ENCODE measurements at regions of chr2 and their contacts with region 1.

Region 1: DNA sequence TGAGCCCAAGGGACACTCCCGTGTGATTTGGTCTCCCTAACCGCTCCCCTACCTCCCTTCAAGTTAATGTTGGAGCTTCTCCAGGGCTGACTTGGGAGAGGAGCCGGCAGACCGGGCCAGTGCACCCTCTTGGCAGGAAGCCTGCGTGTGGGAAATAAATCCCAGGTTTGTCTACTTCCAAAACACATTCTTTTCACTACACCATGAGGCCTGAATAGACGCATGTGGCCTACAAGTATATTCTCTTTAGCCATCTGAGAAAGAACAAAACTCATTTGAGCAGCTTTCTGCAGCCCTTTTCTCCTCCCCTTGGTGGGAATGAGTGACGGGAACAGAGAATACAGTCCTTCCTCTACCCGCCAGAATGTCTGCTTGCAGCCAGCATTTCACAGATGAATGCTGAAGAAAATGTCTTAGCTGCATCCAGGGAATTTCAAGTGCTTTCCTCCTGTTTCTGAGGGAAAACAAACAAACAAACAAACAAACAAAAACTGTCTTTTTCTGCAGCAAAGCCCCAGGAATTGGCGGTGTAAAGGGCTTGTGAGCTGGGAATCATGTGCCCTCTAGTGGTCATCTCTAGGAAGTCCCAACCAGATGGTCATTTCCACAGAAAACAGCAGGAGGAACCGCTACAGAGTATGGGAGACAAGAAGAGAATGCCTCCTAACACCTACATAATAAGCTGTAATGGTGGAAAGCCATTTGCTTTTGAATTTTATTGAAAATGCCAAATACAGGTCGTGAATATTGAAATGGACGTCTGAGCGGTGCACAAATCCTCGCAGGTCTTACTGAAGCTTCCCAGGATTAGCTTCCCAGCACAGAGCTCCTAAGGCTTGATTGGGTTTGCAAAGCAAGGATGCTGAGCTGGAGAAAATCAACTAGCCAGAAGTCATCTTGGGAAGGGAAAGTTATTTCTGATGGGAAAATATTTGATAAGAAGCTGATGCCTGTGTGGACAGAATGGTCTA is 41.2 kb upstream of the DAPL1 start:
- H3K4me3 ChIP-seq: no peak overlapping the region
- H3K27ac ChIP-seq: no peak overlapping the region
- H3K4me1 ChIP-seq: no peaks in the 10 kb centered on the region
- CTCF ChIP-seq: peak; percentile 83

Region 2: GRCh38 chr2:158006961-158007719 is 746.8 kb before region 1 on chr2:
- CTCF ChIA-PET with region 1: interaction called, 12 read pairs
- POLR2A ChIA-PET with region 1: no interaction called
- H3K4me3 ChIP-seq: no peak overlapping the region
- H3K27ac ChIP-seq: no peak overlapping the region
- H3K4me1 ChIP-seq: no peaks in the 10 kb centered on the region
- CTCF ChIP-seq: 0 out of 2 replicates have a peak, but pooled peaks have one; percentile 10

Region 3: DNA sequence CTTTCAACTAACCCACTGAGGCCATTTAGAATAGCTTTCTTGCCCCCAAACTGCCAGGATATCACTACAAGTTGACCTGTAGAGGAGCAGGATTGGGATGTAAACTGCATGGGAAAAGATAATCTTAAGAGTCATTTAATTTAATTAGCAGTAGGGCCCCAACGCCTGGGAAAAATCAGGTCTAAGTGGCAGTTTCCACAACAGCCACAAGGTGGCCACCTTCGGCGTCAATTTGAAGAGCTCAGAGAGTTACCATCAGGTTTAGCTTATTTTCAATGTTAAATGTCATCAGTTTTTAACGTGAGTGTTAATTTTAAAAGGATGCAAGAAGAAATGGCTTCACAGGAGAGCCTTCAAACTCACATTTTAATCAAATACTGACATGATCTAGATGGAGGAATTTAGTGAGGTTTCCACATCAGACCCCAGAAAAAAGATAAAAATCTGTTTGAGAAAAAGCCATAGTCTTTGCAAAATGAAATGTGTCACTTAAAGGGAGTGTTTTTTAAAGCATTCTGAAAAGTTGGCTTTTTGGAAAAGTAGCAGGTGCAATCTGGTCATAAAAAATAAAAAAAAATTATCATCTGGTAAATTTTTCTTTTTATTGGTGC is 729.5 kb before region 1 on chr2:
- CTCF ChIA-PET with region 1: interaction called, 60 read pairs
- POLR2A ChIA-PET with region 1: no interaction called
- H3K4me3 ChIP-seq: no peak overlapping the region
- H3K27ac ChIP-seq: no peak overlapping the region
- H3K4me1 ChIP-seq: no peaks in the 10 kb centered on the region
- CTCF ChIP-seq: peak; percentile 28; the same call in 1 of the 2 replicates

Region 4: GRCh38 chr2:158179660-158180059 is 574.3 kb before region 1 on chr2:
- CTCF ChIA-PET with region 1: interaction called, 33 read pairs
- POLR2A ChIA-PET with region 1: no interaction called
- H3K4me3 ChIP-seq: no peak overlapping the region
- H3K27ac ChIP-seq: no peak overlapping the region
- H3K4me1 ChIP-seq: no peaks in the 10 kb centered on the region
- CTCF ChIP-seq: peak; percentile 26; the same call in 1 of the 2 replicates

Region 5: GRCh38 chr2:158733430-158733755 is 20.5 kb before region 1 on chr2:
- CTCF ChIA-PET with region 1: interaction called, 14 read pairs
- POLR2A ChIA-PET with region 1: no interaction called
- H3K4me3 ChIP-seq: no peak overlapping the region
- H3K27ac ChIP-seq: no peak overlapping the region
- H3K4me1 ChIP-seq: peaks cover 5% of the 10 kb centered on the region; the same call in 1 of the 2 replicates
- CTCF ChIP-seq: no peak

Region 6: DNA sequence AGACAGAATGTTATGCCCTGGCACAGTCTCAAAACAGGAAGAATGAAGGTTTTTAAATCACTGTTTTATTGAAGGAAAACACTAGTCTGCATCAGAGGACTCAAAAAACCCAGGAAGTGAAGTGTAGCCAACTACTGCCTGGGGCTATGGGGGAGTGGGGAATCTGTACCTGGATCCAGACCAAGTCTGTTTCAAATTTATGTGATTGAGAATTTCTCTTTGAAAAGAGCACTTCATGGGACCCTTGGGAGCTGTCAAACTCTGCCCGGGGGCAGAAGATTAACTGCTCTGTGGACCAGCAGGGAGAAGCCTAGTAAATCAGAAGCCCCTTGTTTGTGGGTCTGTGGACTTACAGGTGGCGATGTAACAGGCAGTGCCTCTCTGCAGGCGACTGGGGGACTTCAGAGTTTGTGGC is 169.3 kb after region 1 on chr2:
- CTCF ChIA-PET with region 1: no interaction called
- POLR2A ChIA-PET with region 1: no interaction called
- H3K4me3 ChIP-seq: no peak overlapping the region
- H3K27ac ChIP-seq: peak overlapping the region; percentile 55
- H3K4me1 ChIP-seq: peaks cover 11% of the 10 kb centered on the region
- CTCF ChIP-seq: no peak